ENCODE measurements at regions of chr9 and their contacts with region 1.

Region 1: DNA sequence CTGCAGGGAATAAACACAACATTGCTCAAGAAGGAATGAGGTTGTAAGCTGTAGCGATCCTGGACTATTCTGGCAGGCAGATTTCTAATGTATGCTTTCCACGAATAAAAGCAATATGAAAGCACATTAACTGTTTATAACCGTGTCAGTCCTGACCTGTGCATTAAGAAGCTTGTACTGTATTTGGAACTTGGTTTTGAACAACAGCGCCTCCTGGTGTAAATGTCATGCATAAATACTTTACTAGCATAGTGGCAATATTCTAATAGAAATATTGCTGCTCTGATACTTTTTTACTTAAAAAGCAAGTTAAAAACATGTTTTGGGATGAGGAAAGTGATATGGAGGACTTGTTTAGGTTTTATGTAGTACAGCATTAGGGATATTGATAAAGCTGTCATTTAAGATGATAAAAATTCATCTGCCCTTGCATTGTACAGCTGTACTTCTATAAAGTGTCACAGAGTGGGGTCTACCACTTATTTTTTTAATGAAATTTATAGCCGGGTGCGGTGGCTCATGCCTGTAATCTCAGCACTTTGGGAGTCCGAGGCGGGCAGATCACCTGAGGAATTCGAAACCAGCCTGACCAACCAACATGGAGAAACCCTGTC is 70.7 kb upstream of the GNE start:
- DNase-seq: no peak
- ATAC-seq: peak; percentile 73

Region 2: GRCh38 chr9:36029765-36030528 is 299.0 kb before region 1 on chr9:
- intact Hi-C with region 1: no loop called
- DNase-seq: no peak
- ATAC-seq: peak; percentile 89

Region 3: GRCh38 chr9:36190388-36191287 is 138.3 kb before region 1 on chr9 and contains the start of gene CLTA:
- intact Hi-C with region 1: loop called (anchors 5 kb)
- DNase-seq: peak; percentile 97
- ATAC-seq: peak; percentile 100
- total RNA-seq, gene CLTA: 103 TPM

Region 4: GRCh38 chr9:36258208-36258988 is 70.5 kb before region 1 on chr9 and contains the start of gene GNE:
- intact Hi-C with region 1: loop called (anchors 10 kb)
- DNase-seq: peak; percentile 99
- ATAC-seq: peak; percentile 99
- total RNA-seq, gene GNE: 26.0 TPM

Region 5: DNA sequence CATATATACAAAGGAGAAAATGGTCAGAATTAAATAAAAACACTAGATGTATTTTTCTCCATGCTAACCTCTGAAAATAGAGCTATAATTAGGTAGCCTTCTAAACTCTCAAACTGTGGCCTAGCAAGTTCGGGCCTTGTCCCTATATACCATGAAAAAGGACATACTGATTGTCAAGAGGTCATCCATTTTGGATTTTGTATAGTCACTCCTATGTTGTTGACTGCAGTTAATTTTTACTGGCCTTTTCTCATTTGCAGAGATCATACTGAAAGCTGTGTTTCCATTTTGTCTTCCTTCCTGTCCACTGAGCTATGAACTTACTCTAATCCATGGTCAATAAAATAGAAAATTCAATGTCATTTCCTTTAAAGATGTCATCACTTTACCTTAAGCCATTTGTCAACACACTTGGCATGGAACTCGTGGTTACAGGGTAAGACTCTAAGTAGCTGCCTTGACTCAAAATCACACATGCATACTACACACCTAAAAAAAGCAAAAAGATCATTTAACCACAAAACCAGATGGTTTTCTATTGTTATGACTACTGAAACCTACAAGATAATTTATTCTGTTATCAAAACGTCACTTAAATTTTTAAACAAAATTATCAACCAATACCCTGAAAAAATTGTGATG is 13.2 kb after region 1 on chr9:
- intact Hi-C with region 1: loop called (anchors 2 kb)
- DNase-seq: no peak
- ATAC-seq: no peak

Measured in sciatic nerve (tissue), 2 donors.